Pancreas (tissue), 10 donors: ENCODE measurements at regions of chr15 and their contacts with region 1.

Region 1: GRCh38 chr15:53307952-53308621 is 451.4 kb downstream of the WDR72 start:
- DNase-seq: no peak
- ATAC-seq: no peak
- H3K4me3 ChIP-seq: no peak overlapping the region
- H3K27ac ChIP-seq: no peak overlapping the region
- H3K4me1 ChIP-seq: no peaks in the 10 kb centered on the region
- H3K27me3 ChIP-seq: no peaks in the 10 kb centered on the region
- CTCF ChIP-seq: no peak

Region 2: DNA sequence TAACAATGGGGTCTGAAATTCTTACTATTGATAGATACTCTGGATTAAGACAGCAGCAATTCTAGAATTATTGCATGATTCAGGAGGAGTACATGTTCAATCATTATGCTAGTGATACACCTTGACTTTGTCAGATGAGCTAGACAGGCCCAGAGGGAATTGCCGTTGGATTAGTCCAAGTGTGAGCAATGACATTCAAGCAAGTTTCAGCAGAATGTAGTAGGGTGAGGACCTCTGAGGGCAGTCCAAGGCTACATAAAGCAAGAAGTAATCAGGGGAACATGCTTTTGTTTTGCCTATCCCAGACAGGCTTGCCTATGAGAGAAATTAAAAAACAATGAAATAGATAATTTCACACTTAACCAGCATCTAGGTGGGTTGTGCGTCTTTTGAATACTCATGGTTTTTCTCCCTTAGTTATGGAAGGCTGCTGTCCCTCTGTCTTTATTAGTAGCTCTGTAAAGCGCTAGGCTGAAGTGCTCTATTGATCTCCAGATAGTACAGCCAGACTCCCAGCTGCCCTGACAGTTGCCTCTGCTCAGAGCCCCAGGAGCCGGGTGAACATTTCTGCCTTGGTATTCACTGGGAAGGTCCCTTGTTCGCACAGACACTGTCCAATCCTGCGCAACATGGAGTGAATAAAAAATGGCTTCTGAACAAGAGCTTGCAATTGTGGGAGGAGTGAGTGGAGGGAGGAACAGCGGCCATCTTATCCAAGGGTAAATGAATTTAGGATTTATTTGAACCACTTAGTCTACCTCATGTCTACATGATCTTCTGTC is 201.4 kb before region 1 on chr15:
- intact Hi-C with region 1: no loop called
- DNase-seq: no peak
- ATAC-seq: no peak
- H3K4me3 ChIP-seq: no peak overlapping the region
- H3K27ac ChIP-seq: no peak overlapping the region
- H3K4me1 ChIP-seq: no peaks in the 10 kb centered on the region
- H3K27me3 ChIP-seq: no peaks in the 10 kb centered on the region
- CTCF ChIP-seq: no peak

Region 3: GRCh38 chr15:53171559-53171958 is 136.5 kb before region 1 on chr15:
- intact Hi-C with region 1: no loop called
- DNase-seq: no peak
- ATAC-seq: no peak
- H3K4me3 ChIP-seq: no peak overlapping the region
- H3K27ac ChIP-seq: no peak overlapping the region
- H3K4me1 ChIP-seq: no peaks in the 10 kb centered on the region
- H3K27me3 ChIP-seq: no peaks in the 10 kb centered on the region
- CTCF ChIP-seq: no peak

Region 4: DNA sequence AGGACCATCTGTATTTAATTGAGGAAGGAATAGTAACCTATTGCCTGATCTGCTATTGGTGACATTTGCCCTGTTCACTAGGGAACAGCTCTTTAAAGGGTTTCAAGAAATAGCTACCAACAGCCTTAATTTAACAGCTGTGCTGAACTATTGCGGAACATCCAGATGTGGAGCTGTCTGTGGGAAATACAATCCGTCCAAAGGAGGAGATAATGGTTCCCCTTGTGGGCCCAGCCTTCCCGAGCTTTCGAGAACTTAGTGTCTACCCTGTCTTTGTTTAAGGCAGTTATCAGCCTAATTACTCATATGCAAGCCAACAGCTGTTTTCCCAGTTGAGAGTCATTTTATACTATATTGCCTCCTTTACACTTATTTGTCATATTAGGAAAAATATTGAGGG is 52.8 kb after region 1 on chr15:
- intact Hi-C with region 1: loop called in 1 of 3 experiments (anchors 10 kb)
- DNase-seq: no peak
- ATAC-seq: no peak
- H3K4me3 ChIP-seq: no peak overlapping the region
- H3K27ac ChIP-seq: no peak overlapping the region
- H3K4me1 ChIP-seq: no peaks in the 10 kb centered on the region
- H3K27me3 ChIP-seq: no peaks in the 10 kb centered on the region
- CTCF ChIP-seq: no peak